Activated CD4-positive, alpha-beta T cell treated with anti-CD3 and anti-CD28 coated beads for 36 hours (primary cell): ENCODE measurements at regions of chr4 and their contacts with region 1.

Region 1: GRCh38 chr4:144634978-144635747 is 10.8 kb upstream of the HHIP start:
- DNase-seq: no peak
- ATAC-seq: no peak
- H3K4me3 Mint-ChIP-seq: no peak overlapping the region
- H3K27ac Mint-ChIP-seq: no peak overlapping the region
- H3K4me1 Mint-ChIP-seq: no peaks in the 10 kb centered on the region
- H3K27me3 Mint-ChIP-seq: peaks cover 10% of the 10 kb centered on the region

Region 2: DNA sequence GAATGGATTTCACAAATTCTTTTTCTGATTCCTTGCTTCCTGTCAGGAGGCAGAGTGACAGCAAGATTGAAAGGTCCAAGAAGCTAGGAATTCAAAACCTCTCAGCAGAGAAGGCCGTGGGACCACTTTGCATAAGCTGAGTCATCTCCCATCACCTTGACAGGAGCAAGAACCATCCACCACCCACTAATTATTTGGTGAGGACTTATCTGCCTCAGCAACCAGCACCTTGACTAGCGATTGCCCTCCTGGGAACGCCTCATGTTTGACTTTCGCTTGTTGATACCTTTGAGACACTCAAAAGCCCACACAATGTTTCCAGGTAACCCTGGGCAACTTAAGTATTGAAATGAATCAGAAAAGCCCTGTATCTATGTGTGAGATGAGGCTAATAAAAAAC is 261.1 kb before region 1 on chr4:
- CTCF ChIA-PET with region 1: no interaction called
- POLR2A ChIA-PET with region 1: no interaction called
- intact Hi-C with region 1: no loop called
- DNase-seq: peak; percentile 16
- ATAC-seq: no peak
- H3K4me3 Mint-ChIP-seq: no peak overlapping the region
- H3K27ac Mint-ChIP-seq: no peak overlapping the region
- H3K4me1 Mint-ChIP-seq: no peaks in the 10 kb centered on the region
- H3K27me3 Mint-ChIP-seq: no peaks in the 10 kb centered on the region

Region 3: DNA sequence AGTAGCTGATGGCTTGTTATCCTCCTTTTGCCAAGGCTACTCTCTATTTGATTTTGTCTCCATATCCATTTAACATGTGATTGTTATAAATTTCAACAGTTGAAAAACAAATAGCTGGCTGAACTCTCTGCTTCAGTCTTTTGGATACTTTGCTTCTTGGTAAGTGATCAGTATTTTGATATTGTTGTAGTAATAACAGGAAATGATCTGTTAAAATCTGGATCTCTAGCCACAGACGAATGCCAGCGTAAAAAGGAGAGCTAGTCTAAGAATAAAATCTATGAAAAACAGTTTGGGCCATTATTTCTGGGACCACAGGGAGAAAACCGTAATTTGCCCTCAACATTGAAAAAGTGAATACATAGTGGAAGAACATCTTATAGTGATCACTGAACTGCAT is 349.1 kb after region 1 on chr4:
- CTCF ChIA-PET with region 1: no interaction called
- POLR2A ChIA-PET with region 1: no interaction called
- intact Hi-C with region 1: loop called in 1 of 2 experiments (anchors 5 kb)
- DNase-seq: no peak
- ATAC-seq: no peak
- H3K4me3 Mint-ChIP-seq: no peak overlapping the region
- H3K27ac Mint-ChIP-seq: no peak overlapping the region
- H3K4me1 Mint-ChIP-seq: no peaks in the 10 kb centered on the region
- H3K27me3 Mint-ChIP-seq: no peaks in the 10 kb centered on the region